Cardiac septum (tissue), 1 donor: ENCODE measurements at regions of chr7 and their contacts with region 1.

Region 1: DNA sequence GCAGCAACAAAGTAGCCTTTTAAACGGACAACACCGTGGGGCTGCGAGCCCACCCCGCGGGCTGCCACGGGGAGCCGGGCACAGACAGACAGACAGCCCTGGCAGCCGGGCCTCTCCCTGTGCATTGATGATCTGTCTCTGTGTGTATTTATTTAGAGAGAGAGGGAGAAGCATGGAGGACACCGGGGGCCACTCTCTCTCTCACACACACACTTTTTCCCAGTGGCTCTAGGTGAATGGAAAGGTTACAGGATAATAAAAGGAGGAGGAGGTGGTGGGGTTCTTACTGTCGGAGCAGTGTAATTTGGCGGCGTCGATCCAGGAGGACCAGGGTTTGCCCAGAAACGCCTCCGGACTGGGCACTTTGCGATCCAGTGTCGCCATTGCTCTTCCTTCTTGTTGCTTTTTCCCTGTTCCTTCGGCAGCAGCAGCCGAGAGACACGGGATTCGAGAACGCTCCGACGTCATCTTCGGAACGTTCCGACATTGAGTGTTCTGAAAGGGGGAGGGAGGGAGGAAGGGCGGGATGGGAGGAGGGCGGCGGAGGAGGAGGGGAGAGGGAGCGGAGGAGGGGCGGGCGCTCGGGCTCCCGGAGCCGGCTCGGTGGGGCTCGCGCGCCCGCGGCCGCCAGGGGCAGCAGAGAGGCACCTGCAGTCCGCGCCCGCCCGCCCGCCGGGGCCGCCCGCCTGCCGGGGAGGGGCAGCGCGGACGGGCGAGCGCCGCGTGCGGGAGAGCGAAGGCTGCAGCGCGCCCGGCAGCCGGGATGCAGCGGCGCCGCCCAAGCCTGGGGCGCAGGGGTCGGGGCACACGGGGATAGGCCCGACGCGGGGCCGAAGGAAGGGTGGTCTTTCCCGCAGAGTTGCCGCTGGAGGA is at the start of gene ATXN7L1:
- DNase-seq: peak; percentile 96
- total RNA-seq, gene ATXN7L1: 5.5 TPM

Region 2: DNA sequence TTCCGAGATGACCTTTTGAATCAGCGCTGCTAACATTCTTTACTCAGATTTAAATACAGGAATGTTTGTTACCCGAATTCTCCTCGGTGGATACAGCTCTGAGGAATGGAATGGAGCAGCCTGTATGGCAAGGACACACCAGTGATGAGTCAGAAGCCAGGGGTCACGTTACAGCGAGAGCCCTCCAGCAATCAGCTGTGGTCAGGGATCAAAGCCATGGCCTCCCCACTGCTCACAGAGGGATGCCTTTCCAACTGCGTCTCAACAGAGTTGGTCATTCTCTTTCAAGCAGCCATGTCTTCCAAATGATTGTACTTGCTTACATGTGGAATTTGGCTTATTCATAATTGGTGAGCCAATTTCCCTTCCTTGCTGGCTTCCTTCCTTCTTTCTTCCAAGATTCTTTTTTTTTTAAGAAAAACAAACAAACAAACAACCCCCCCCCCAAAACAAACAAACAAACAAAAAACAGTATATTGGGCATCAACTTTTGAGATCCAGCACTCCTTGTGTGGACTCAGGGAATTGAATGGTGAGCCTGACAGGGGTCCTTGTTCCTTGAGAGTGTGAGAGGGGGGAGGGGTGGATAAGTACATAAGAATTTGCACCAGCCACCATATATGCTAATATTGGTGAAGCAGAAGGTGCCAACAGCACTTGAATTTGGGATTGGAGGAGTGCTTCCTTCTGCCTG is 100.1 kb before region 1 on chr7:
- intact Hi-C with region 1: loop called (anchors 10 kb)
- DNase-seq: no peak